Lower leg skin (tissue), 4 donors: ENCODE measurements at regions of chr16 and their contacts with region 1.

Region 1: DNA sequence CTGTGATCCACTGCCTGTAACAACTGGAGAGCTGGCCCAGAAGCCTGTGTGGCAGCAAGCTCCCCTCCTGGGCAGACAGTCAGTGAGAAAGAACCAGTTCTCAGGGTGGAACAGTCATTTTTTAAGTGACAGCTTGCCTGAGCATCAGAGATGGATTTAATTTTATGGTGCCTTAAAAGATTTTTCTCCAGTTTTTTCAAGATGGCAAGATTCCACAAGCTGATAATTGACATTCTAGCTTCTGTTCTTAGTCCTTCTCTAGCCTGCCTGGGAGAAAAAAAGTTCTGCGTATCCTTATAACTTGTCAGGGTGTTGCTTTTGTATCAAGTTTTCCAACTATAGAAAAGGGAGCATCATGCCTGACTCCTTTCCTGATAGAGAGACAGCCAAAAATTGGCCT is 21.2 kb downstream of the CALB2 start:
- DNase-seq: no peak
- H3K4me3 ChIP-seq: no peak overlapping the region
- CTCF ChIP-seq: no peak
- POLR2A ChIP-seq: no peak

Region 2: GRCh38 chr16:71406724-71407123 is 27.0 kb after region 1 on chr16:
- intact Hi-C with region 1: loop called (anchors 1 kb)
- DNase-seq: no peak
- H3K4me3 ChIP-seq: no peak overlapping the region
- CTCF ChIP-seq: no peak
- POLR2A ChIP-seq: no peak

Region 3: GRCh38 chr16:72677662-72678447 is 1298.1 kb after region 1 on chr16:
- intact Hi-C with region 1: no loop called
- DNase-seq: no peak
- H3K4me3 ChIP-seq: no peak overlapping the region
- CTCF ChIP-seq: no peak
- POLR2A ChIP-seq: no peak